ENCODE measurements at regions of chr7 and their contacts with region 1.

Region 1: GRCh38 chr7:101542527-101543241 is 86.4 kb downstream of the MYL10 start:
- DNase-seq: peak; percentile 89
- H3K4me3 Mint-ChIP-seq: no peak overlapping the region
- H3K27ac Mint-ChIP-seq: no peak overlapping the region
- H3K4me1 Mint-ChIP-seq: peaks cover 1% of the 10 kb centered on the region
- H3K27me3 Mint-ChIP-seq: no peaks in the 10 kb centered on the region

Region 2: GRCh38 chr7:101436857-101437576 is 105.7 kb before region 1 on chr7:
- CTCF ChIA-PET with region 1: no interaction called
- intact Hi-C with region 1: no loop called
- DNase-seq: no peak
- H3K4me3 Mint-ChIP-seq: no peak overlapping the region
- H3K27ac Mint-ChIP-seq: no peak overlapping the region
- H3K4me1 Mint-ChIP-seq: peaks cover 2% of the 10 kb centered on the region
- H3K27me3 Mint-ChIP-seq: peaks cover 8% of the 10 kb centered on the region

Region 3: DNA sequence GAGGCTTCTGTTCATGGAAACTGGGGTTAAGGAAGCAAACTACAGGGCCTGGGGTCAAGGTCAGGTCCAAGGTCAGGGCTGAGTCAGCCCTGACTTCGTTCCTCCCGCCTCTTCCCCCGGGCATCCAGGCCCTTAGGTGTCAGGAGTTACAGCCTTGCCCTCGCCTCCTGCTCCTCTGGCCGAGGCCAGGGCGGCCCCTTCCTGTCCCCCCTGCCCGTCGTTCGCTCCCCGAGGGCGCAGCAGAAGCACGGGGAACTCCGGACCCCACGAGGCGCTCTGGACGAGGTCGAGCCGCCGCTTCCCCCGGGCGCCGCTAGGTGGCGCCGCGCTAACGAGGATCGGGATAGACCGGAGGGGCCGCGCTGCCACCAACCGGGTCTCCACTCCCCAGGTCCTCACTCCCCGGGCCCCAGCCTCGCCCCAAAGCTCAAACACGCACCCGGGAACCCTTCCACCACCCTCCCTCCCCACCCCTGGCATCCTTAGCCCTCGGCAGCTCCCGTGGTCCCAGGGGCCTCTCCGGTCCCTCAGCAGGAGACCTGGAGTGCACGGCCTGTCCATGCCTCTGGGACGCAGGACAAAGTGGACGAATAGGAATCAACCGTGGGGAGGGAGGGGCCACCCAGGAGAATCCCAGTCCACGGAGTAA is 145.6 kb after region 1 on chr7:
- CTCF ChIA-PET with region 1: interaction called, 3 read pairs
- intact Hi-C with region 1: loop called (anchors 10 kb)
- DNase-seq: peak; percentile 84
- H3K4me3 Mint-ChIP-seq: no peak overlapping the region
- H3K27ac Mint-ChIP-seq: no peak overlapping the region
- H3K4me1 Mint-ChIP-seq: no peaks in the 10 kb centered on the region
- H3K27me3 Mint-ChIP-seq: no peaks in the 10 kb centered on the region

Region 4: GRCh38 chr7:102236592-102237287 is 694.1 kb after region 1 on chr7:
- CTCF ChIA-PET with region 1: interaction called, 3 read pairs
- intact Hi-C with region 1: loop called (anchors 1 kb)
- DNase-seq: peak; percentile 67
- H3K4me3 Mint-ChIP-seq: no peak overlapping the region
- H3K27ac Mint-ChIP-seq: no peak overlapping the region
- H3K4me1 Mint-ChIP-seq: no peaks in the 10 kb centered on the region
- H3K27me3 Mint-ChIP-seq: no peaks in the 10 kb centered on the region

Region 5: DNA sequence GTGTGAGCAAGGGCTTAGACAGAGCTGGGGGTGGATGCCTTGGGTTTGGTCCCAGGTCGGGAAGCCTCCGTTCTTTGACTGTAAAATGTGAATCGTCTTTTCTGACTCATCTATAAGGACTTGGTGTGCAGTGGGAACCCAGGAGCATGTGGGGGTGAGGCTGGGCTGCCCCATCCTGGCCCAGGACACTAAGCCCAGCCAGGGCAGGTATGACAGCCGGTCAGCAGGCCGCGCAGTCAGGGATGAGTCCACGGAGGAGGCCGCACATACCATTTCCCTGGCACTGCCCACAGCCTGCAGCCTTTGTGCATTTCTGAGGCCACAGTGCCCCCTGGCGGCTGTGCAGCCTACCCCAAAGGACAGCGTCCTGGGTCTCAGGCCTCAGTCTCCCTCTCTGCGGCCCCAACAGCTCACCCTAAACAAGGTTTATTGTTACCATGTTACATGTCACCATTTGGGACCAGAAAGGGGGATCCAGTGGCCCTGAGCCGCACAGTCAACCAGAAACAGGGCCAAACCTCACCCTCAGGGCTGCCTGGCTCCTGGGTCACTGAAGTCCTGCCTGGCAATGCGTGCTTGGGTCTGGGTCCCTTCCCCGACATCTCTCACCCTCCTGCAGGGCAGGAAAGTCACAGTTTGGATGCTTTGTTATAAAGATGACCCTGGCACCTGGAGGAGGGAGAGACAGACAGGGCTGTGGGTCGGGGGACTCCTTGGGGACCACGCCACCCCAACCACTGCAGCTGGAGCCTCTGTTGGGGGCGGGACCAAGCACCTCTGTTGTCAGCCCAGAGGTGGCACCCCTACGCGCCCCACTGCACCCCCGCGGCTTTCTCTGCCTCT is 729.6 kb after region 1 on chr7:
- CTCF ChIA-PET with region 1: interaction called, 9 read pairs
- intact Hi-C with region 1: loop called (anchors 1 kb)
- DNase-seq: peak; percentile 83
- H3K4me3 Mint-ChIP-seq: no peak overlapping the region
- H3K27ac Mint-ChIP-seq: no peak overlapping the region
- H3K4me1 Mint-ChIP-seq: peaks cover 3% of the 10 kb centered on the region
- H3K27me3 Mint-ChIP-seq: no peaks in the 10 kb centered on the region

Region 6: GRCh38 chr7:102390697-102391484 is 848.2 kb after region 1 on chr7:
- CTCF ChIA-PET with region 1: no interaction called
- intact Hi-C with region 1: loop called (anchors 2 kb)
- DNase-seq: peak; percentile 77
- H3K4me3 Mint-ChIP-seq: no peak overlapping the region
- H3K27ac Mint-ChIP-seq: no peak overlapping the region
- H3K4me1 Mint-ChIP-seq: peaks cover 5% of the 10 kb centered on the region
- H3K27me3 Mint-ChIP-seq: no peaks in the 10 kb centered on the region